H1 (cell line): ENCODE measurements at regions of chr3 and their contacts with region 1.

Region 1: DNA sequence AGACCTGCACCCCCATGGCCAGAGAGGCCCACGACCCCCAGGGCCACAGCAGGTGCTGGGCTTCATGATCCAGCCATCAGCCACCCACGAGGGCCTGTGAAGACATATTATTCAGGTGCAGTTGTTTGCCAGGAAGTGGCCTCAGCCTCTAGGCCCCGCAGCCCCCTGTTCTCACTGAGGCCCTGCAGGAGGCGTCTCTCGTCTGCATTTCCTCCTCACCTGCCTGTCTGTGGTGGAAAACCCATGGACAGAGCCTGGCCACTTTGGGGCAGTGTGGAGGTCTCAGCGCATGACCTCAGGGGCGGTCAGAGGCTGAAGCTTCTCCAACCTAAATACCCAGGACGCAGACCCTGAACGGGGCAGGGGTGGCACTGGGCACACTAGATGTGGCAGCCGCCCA is 18.6 kb downstream of the UROC1 start:
- DNase-seq: no peak
- H3K4me3 ChIP-seq: no peak overlapping the region
- H3K27ac ChIP-seq: no peak overlapping the region
- H3K4me1 ChIP-seq: peaks cover 0 to 22% (median 16%) of the 10 kb centered on the region in 4 experiments; a peak in 6 of 7 replicates
- H3K27me3 ChIP-seq: no peaks in the 10 kb centered on the region; a peak in 1 of 7 replicates
- CTCF ChIP-seq: peak in 2 of 3 experiments; percentile 21 to 29; a peak in 2 of 4 replicates
- EP300 ChIP-seq: no peak
- POLR2A ChIP-seq: no peak
- RAD21 ChIP-seq: peak; percentile 31 to 42; a peak in 3 of 4 replicates

Region 2: DNA sequence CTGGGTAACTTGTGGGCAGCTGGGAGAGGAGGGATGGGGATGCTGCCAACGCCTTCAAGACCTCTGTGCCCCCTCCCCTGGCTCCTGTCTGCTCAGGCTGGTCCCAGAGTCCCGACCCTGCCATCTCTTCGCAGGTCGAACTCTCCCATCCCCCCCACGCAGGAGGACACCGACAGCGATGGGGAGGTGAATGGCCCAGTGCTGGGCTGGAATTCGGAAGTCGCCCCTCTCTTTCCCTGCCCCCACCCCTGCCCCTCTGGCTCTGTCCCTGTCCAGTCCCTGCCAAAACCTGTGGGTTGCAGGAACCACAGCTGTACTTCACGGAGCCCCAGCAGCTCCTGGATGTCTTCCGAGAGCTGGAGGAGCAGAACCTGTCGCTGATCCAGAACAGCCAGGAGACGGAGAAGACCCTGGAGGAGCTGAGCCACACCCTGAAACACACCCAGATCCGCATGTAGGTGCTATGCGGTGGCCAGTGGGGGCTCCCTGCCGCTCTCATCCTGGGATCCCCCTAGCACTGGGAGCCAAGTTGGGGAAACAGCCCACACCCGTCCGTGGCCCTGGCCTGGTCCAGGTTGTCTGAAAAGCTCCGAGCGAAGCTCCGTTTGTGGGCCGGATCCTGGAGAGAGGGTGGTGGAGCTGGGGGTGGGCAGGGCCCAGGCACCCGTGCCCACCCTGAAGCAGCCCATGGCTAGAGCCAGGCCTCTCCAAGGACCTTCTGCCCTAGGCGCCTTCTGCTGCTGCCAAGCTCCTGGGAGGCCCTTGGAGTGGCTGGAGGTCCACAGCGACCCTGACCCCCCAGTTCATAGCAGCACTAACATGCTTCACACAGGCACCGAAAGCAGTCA is 75.5 kb before region 1 on chr3:
- CTCF ChIA-PET with region 1: no interaction called
- POLR2A ChIA-PET with region 1: no interaction called
- DNase-seq: no peak
- H3K4me3 ChIP-seq: no peak overlapping the region
- H3K27ac ChIP-seq: no peak overlapping the region
- H3K4me1 ChIP-seq: peaks cover 0 to 7% (median 2%) of the 10 kb centered on the region in 4 experiments; a peak in 2 of 7 replicates
- H3K27me3 ChIP-seq: no peaks in the 10 kb centered on the region; a peak in 1 of 7 replicates
- CTCF ChIP-seq: no peak
- EP300 ChIP-seq: no peak
- POLR2A ChIP-seq: no peak
- RAD21 ChIP-seq: no peak

Region 3: GRCh38 chr3:126509597-126510307 is 10.8 kb after region 1 on chr3:
- CTCF ChIA-PET with region 1: interaction called, 30 read pairs
- POLR2A ChIA-PET with region 1: no interaction called
- DNase-seq: no peak
- H3K4me3 ChIP-seq: no peak overlapping the region
- H3K27ac ChIP-seq: no peak overlapping the region
- H3K4me1 ChIP-seq: no peaks in the 10 kb centered on the region
- H3K27me3 ChIP-seq: no peaks in the 10 kb centered on the region
- CTCF ChIP-seq: no peak
- EP300 ChIP-seq: no peak
- POLR2A ChIP-seq: no peak
- RAD21 ChIP-seq: no peak

Region 4: GRCh38 chr3:126703512-126704462 is 204.9 kb after region 1 on chr3 and contains the start of gene CHCHD6:
- CTCF ChIA-PET with region 1: no interaction called
- POLR2A ChIA-PET with region 1: no interaction called
- DNase-seq: peak; percentile 97
- H3K4me3 ChIP-seq: peak within 1 kb of the TSS; percentile 57 to 77 (median 62)
- H3K27ac ChIP-seq: no peak within 1 kb of the TSS
- H3K4me1 ChIP-seq: peaks cover 3 to 8% (median 5%) of the 10 kb centered on the region in 4 experiments; a peak in 6 of 7 replicates
- H3K27me3 ChIP-seq: peaks cover 0 to 15% (median 6%) of the 10 kb centered on the region in 4 experiments; a peak in 5 of 7 replicates
- CTCF ChIP-seq: peak; percentile 15 to 35 (median 16); a peak in 3 of 4 replicates
- EP300 ChIP-seq: no peak
- POLR2A ChIP-seq: no peak; a peak in 1 of 3 replicates
- RAD21 ChIP-seq: peak; percentile 25 to 36; a peak in 3 of 4 replicates
- total RNA-seq, gene CHCHD6: 36.3 and 37.6 TPM in 2 replicates